RWPE1 (cell line): ENCODE measurements at regions of chr13 and their contacts with region 1.

Region 1: GRCh38 chr13:105611424-105611823 is 924.0 kb downstream of the EFNB2 start:
- DNase-seq: peak; percentile 45
- H3K27ac ChIP-seq: no peak overlapping the region
- CTCF ChIP-seq: no peak

Region 2: GRCh38 chr13:105572401-105572800 is 39.0 kb before region 1 on chr13:
- CTCF ChIA-PET with region 1: interaction called, 10 read pairs
- POLR2A ChIA-PET with region 1: no interaction called
- DNase-seq: peak; percentile 13
- H3K27ac ChIP-seq: no peak overlapping the region
- CTCF ChIP-seq: no peak